ENCODE measurements at regions of chr6 and their contacts with region 1.

Region 1: DNA sequence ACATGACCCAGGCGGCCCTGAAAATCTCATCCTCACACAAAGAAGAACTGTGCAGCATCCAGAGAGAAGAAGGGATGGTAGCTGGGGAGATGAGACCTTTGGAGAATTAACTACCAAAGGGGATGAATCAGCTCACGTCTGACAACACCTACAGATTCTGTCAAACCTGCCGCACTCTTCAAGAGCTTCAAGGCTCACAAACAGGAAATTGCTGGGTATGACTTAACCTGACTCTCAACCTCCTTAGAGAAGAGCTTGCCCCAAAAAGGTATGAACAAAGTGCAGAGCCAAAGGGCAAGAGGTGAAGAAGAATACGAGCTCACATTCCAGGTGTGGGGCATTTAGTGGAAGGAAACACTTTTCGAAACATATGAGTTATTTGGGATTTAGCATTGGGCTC is 139.8 kb downstream of the BACH2 start:
- DNase-seq: peak; percentile 46 to 54 (median 49)
- H3K4me3 ChIP-seq: no peak overlapping the region
- H3K4me3 Mint-ChIP-seq: peak overlapping the region; percentile 3 to 73 (median 60)
- H3K27ac ChIP-seq: no peak overlapping the region
- H3K27ac Mint-ChIP-seq: peak overlapping the region; percentile 40 to 92 (median 84)
- H3K4me1 ChIP-seq: peaks cover 43% of the 10 kb centered on the region
- H3K4me1 Mint-ChIP-seq: peaks cover 22 to 64% (median 49%) of the 10 kb centered on the region in 4 donors
- H3K27me3 ChIP-seq: no peaks in the 10 kb centered on the region
- H3K27me3 Mint-ChIP-seq: no peaks in the 10 kb centered on the region

Region 2: GRCh38 chr6:90121982-90122381 is 34.9 kb before region 1 on chr6:
- CTCF ChIA-PET with region 1: no interaction called
- POLR2A ChIA-PET with region 1: no interaction called
- intact Hi-C with region 1: no loop called
- DNase-seq: no peak
- H3K4me3 ChIP-seq: no peak overlapping the region
- H3K4me3 Mint-ChIP-seq: no peak overlapping the region
- H3K27ac ChIP-seq: no peak overlapping the region
- H3K27ac Mint-ChIP-seq: peak overlapping the region in 1 of 7 donors; percentile 47
- H3K4me1 ChIP-seq: no peaks in the 10 kb centered on the region
- H3K4me1 Mint-ChIP-seq: peaks cover 5 to 27% (median 17%) of the 10 kb centered on the region in 4 donors
- H3K27me3 ChIP-seq: no peaks in the 10 kb centered on the region
- H3K27me3 Mint-ChIP-seq: no peaks in the 10 kb centered on the region

Region 3: DNA sequence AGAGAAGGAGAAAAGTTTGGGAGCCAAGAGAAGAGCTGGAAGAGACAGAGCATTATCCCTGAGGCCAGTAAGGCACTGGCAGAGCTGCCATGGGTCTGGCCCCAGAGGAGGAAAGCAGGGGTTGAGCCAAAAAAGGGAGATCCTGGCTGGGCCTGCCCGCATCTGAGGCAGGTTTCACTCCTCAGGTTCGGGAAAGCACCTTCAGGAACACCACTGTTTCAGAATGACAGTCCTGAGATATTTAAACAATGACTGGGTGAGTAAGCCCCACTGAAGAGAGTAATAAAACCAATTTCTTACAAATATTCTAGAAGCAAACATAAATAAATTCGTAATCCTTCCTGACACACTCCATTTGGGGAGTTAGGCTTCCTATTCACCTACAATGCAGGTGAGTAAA is 12.5 kb before region 1 on chr6:
- CTCF ChIA-PET with region 1: interaction called, 6 read pairs
- POLR2A ChIA-PET with region 1: interaction called, 6 read pairs
- intact Hi-C with region 1: loop called (anchors 2 kb)
- DNase-seq: no peak
- H3K4me3 ChIP-seq: no peak overlapping the region
- H3K4me3 Mint-ChIP-seq: no peak overlapping the region
- H3K27ac ChIP-seq: no peak overlapping the region
- H3K27ac Mint-ChIP-seq: no peak overlapping the region
- H3K4me1 ChIP-seq: peaks cover 6% of the 10 kb centered on the region
- H3K4me1 Mint-ChIP-seq: peaks cover 12 to 30% (median 20%) of the 10 kb centered on the region in 4 donors
- H3K27me3 ChIP-seq: no peaks in the 10 kb centered on the region
- H3K27me3 Mint-ChIP-seq: no peaks in the 10 kb centered on the region

Region 4: DNA sequence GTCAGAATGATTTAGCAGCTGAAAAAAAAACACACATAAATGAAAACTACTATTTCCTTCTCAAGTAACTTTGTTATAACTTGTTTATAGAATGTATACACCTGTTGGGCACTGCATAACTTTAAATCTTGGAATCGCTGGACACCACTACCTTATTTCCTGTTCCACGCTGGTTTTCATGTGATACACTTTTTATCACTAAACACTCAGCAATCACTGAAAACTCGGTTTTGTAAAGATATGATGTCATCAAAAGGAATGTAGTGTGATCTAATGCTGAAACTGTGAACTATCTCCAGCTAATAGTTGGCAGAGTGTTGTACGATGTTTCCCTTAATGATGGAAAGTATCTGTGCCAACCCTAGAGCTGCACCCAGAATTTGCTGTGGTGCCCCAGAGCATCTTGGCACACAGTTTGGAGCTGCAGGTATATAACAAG is 11.9 kb after region 1 on chr6:
- CTCF ChIA-PET with region 1: no interaction called
- POLR2A ChIA-PET with region 1: no interaction called
- intact Hi-C with region 1: no loop called
- DNase-seq: no peak
- H3K4me3 ChIP-seq: no peak overlapping the region
- H3K4me3 Mint-ChIP-seq: no peak overlapping the region
- H3K27ac ChIP-seq: no peak overlapping the region
- H3K27ac Mint-ChIP-seq: no peak overlapping the region
- H3K4me1 ChIP-seq: peaks cover 5% of the 10 kb centered on the region
- H3K4me1 Mint-ChIP-seq: peaks cover 4 to 18% (median 11%) of the 10 kb centered on the region in 4 donors
- H3K27me3 ChIP-seq: no peaks in the 10 kb centered on the region
- H3K27me3 Mint-ChIP-seq: no peaks in the 10 kb centered on the region

Measured in CD4-positive, alpha-beta memory T cell (primary cell).